ENCODE measurements at regions of chr17 and their contacts with region 1.

Region 1: DNA sequence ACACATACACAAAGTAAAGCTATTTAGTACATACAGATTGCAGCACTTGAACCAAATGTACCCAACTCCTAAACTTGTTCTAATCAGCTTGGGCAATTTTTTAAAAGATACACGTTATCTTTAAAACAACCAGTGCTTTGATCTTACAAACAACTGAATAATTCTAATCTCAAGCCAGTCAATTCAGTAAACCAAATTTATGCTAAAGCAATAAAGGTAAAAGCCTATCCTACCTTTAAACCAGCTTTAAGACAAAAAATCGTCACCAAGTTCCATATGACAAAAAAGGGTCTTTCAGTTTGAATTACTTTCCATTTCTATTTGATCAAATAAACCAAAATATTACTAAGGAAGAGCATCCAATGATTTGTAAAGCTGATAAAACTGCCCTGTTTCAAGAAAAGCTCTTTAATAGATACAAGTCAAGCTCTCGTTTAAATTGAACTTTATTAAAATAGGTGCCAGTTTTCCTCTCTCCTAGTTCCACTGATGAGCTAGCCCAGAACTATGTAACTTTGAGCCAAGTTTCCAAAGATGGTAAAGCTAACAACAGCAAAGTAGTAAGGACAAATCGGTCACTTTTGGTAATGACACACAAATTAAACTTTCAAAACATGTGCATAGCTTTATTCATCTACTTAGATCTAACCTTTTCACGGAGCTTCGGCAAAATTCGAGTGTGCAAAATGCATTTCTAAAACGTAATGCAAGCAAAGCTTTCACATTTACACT is 10.2 kb downstream of the CRYBA1 start:
- DNase-seq: peak; percentile 53
- ATAC-seq: peak; percentile 48
- H3K4me3 ChIP-seq: peak overlapping the region; percentile 25; the same call in 1 of the 2 replicates
- H3K27ac ChIP-seq: peak overlapping the region; percentile 66; the same call in 1 of the 2 replicates
- H3K4me1 ChIP-seq: peaks cover 10% of the 10 kb centered on the region
- H3K27me3 ChIP-seq: no peaks in the 10 kb centered on the region
- CTCF ChIP-seq: no peak
- POLR2A ChIP-seq: no peak
- RAD21 ChIP-seq: no peak

Region 2: DNA sequence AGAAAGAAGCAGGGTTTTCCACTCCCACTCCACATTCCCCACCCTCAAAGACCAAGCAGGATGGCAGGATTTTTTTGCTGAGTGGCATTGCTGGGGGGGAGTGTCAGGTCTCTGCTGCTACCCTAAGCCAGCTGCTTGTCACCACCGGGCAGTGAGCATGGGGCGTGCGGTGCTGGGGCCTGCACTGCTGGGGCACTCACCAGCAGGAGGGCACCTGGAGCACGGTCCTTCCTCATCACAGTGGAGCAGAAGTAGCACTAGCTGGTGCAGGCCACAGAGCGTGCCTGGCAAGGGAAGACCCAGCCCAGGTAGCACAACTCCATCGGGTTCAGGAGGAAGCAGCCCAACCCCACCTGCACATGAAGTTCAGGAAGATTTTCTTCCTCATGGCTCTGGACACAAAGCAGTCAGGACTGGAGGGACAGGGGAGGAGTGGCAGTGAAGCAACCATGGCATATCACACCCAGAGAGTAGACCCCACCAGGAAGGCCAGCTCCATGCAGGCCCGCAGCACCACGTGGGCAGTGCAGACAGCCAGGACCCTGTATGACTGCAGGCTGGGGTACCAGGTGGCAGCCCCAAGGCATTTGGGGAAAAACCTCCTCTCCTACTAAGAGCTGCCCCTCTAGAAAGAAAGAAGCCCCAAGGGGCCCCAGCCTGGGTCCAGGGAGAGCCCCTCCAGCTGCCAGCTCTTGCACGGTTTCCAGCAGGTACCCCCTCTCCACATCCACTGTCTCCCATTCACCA is 60.0 kb before region 1 on chr17:
- CTCF ChIA-PET with region 1: no interaction called
- POLR2A ChIA-PET with region 1: no interaction called
- dilution Hi-C with region 1: no loop called
- in situ Hi-C with region 1: no loop called
- intact Hi-C with region 1: no loop called
- DNase-seq: no peak
- ATAC-seq: no peak
- H3K4me3 ChIP-seq: no peak overlapping the region
- H3K27ac ChIP-seq: no peak overlapping the region
- H3K4me1 ChIP-seq: peaks cover 2% of the 10 kb centered on the region; the same call in 1 of the 2 replicates
- H3K27me3 ChIP-seq: peaks cover 16% of the 10 kb centered on the region
- CTCF ChIP-seq: no peak
- POLR2A ChIP-seq: no peak
- RAD21 ChIP-seq: no peak

Region 3: GRCh38 chr17:29241015-29241963 is 15.6 kb before region 1 on chr17:
- CTCF ChIA-PET with region 1: interaction called, 15 read pairs
- POLR2A ChIA-PET with region 1: no interaction called
- dilution Hi-C with region 1: no loop called
- in situ Hi-C with region 1: no loop called
- intact Hi-C with region 1: no loop called
- DNase-seq: peak; percentile 98
- ATAC-seq: peak; percentile 90
- H3K4me3 ChIP-seq: no peak overlapping the region
- H3K27ac ChIP-seq: peak overlapping the region; percentile 97
- H3K4me1 ChIP-seq: peaks cover 25% of the 10 kb centered on the region
- H3K27me3 ChIP-seq: no peaks in the 10 kb centered on the region
- CTCF ChIP-seq: 0 out of 2 replicates have a peak, but pooled peaks have one; percentile 18
- POLR2A ChIP-seq: no peak
- RAD21 ChIP-seq: peak; percentile 14; the same call in 1 of the 2 replicates

Region 4: DNA sequence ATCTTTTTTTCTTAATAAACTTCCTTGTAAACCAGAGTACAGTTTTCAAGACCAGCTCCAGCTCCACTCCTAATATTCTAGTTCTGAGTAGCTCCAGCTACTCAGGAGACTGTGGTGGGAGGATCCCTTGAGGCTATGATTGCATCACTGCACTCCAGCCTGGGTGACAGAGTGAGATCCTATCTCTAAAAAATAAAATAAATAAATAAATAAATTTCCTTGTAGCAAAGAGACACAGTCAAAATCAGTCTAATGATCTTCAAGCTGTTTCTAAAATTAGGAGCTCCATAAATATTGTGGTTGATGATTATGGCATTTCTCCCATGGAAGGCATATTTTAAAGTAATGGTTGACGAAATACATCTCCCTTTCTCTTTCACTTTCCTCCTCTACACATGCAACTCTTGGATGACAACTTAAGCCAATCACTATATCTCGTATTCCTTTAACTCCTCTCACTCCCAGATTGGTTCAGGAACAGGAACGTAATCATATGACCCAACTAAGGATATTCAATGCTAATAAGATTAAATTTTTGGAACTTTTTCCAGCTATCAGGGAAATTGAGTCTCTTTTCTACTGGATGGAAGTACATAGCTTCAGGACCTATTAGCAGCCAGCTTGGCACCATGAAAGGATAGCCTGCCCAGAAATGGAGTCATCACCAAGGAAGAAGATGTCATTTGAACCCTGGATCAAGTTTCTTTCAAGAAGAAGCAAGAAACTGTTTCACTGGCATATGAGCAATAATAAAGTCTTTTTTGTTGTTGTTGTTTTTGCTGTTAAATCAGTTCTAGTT is 91.1 kb after region 1 on chr17:
- CTCF ChIA-PET with region 1: no interaction called
- POLR2A ChIA-PET with region 1: no interaction called
- dilution Hi-C with region 1: no loop called
- in situ Hi-C with region 1: no loop called
- intact Hi-C with region 1: no loop called
- DNase-seq: no peak
- ATAC-seq: no peak; the same call in 1 of the 2 replicates
- H3K4me3 ChIP-seq: no peak overlapping the region
- H3K27ac ChIP-seq: no peak overlapping the region
- H3K4me1 ChIP-seq: no peaks in the 10 kb centered on the region
- H3K27me3 ChIP-seq: peaks cover 6% of the 10 kb centered on the region
- CTCF ChIP-seq: no peak
- POLR2A ChIP-seq: no peak
- RAD21 ChIP-seq: no peak

Region 5: GRCh38 chr17:29664743-29665480 is 408.0 kb after region 1 on chr17:
- CTCF ChIA-PET with region 1: no interaction called
- POLR2A ChIA-PET with region 1: no interaction called
- dilution Hi-C with region 1: no loop called
- in situ Hi-C with region 1: no loop called
- intact Hi-C with region 1: no loop called
- DNase-seq: peak; percentile 73
- ATAC-seq: peak; percentile 75
- H3K4me3 ChIP-seq: no peak overlapping the region
- H3K27ac ChIP-seq: no peak overlapping the region
- H3K4me1 ChIP-seq: peaks cover 3% of the 10 kb centered on the region; the same call in 1 of the 2 replicates
- H3K27me3 ChIP-seq: no peaks in the 10 kb centered on the region
- CTCF ChIP-seq: no peak
- POLR2A ChIP-seq: no peak
- RAD21 ChIP-seq: no peak